ENCODE measurements at regions of chr5 and their contacts with region 1.

Region 1: DNA sequence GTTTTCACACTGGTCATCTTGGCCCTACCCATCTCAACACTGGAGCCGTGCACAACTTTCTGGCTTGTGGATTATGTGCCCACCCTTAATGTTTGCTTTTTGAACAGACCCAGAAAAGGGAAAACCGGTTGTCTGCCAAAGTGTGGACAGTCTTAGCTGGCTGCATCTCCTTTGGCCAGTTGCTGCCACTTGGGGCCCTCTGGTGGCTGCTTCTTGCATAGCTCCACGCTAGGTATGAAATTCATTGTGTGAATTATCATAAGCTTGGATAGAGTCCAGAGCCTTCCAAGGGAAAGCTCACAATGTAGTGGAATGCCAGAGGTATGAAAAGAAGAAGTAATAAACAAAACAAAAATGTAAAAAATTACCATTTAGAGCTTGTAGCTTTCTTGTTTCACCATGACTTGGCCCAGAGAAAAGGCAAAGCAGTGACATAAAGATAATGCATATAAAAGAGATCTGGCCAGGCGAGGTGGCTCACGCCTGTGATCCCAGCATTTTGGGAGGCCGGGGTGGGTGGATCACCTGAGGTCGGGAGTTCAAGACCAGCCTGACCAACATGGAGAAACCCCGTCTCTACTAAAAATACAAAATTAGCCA is 12.5 kb upstream of the SLC36A3 start:
- H3K4me3 ChIP-seq: no peak overlapping the region
- H3K27ac ChIP-seq: no peak overlapping the region
- H3K4me1 ChIP-seq: 0 out of 2 replicates have a peak, but pooled peaks cover 6% of the 10 kb centered on the region
- CTCF ChIP-seq: peak; percentile 56

Region 2: GRCh38 chr5:151288180-151288579 is 27.9 kb before region 1 on chr5:
- CTCF ChIA-PET with region 1: interaction called, 11 read pairs
- POLR2A ChIA-PET with region 1: no interaction called
- H3K4me3 ChIP-seq: no peak overlapping the region
- H3K27ac ChIP-seq: no peak overlapping the region
- H3K4me1 ChIP-seq: 0 out of 2 replicates have a peak, but pooled peaks cover 2% of the 10 kb centered on the region
- CTCF ChIP-seq: no peak

Region 3: DNA sequence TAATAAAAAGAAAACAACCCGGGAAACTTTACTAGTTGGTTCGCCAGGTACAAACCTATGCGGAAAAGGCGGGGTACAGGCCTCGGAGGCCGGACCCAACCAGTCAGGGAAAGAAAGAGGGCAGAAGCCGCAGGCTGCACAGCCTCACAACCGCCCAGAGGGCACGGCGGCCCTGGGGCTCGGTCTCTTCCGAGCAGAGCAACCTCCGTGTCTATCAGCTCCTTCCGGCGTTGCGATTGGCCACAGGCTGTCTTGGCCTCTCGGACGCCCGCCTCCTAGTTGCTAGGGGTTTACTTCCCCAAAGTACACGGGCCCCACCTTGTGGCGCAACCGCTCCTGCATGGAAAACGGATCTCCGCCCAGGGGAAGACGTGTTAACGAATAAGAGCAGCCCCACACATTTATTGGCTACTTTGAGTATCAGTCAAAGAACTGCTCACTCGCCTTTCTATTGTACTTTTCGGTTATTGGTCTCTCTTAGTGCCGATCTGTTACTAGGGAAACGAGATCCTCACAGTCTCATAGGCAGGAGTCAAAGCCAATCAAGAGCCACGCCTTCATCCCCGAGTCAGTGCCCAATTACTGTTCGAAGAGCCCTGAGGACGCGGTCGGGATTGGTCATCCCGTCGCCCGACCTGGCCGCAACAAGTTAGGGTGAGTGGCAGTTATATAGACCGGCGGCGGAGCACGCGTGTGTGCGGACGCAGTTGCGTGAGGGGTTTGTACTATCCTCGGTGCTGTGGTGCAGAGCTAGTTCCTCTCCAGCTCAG is 455.3 kb after region 1 on chr5 and contains the start of gene G3BP1:
- CTCF ChIA-PET with region 1: no interaction called
- POLR2A ChIA-PET with region 1: no interaction called
- H3K4me3 ChIP-seq: peak within 1 kb of the TSS; percentile 89
- H3K27ac ChIP-seq: peak within 1 kb of the TSS; percentile 99
- H3K4me1 ChIP-seq: peaks cover 12% of the 10 kb centered on the region
- CTCF ChIP-seq: peak; percentile 69

Measured in HEK293 (cell line).